Ovary (tissue), 10 donors: ENCODE measurements at regions of chr6 and their contacts with region 1.

Region 1: DNA sequence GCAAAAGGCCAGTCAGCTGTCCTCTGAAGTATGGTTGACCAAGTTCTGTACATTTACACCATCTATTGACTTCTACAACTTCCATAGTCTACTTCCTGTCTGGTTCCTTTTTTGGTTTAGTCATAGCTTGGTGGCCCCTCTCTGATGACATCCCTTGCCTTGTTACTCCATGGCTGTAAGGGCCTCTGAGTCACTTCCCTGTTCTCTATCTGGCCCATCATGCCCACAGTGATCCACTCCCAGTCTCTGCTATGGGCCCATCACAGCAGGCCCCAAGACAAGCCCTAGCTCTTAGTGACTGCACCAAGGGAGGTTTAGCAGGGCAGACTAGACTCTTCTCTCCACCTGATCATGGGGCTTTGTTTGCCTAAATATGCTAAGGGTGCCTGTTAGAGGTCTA is 441.6 kb downstream of the HACE1 start:
- DNase-seq: no peak
- H3K4me3 ChIP-seq: no peak overlapping the region
- H3K27ac ChIP-seq: no peak overlapping the region
- H3K4me1 ChIP-seq: no peaks in the 10 kb centered on the region
- H3K27me3 ChIP-seq: no peaks in the 10 kb centered on the region
- CTCF ChIP-seq: no peak
- EP300 ChIP-seq: no peak
- POLR2A ChIP-seq: no peak

Region 2: GRCh38 chr6:104949206-104949605 is 531.1 kb after region 1 on chr6:
- intact Hi-C with region 1: loop called in 1 of 4 experiments (anchors 5 kb)
- DNase-seq: no peak
- H3K4me3 ChIP-seq: no peak overlapping the region
- H3K27ac ChIP-seq: no peak overlapping the region
- H3K4me1 ChIP-seq: no peaks in the 10 kb centered on the region
- H3K27me3 ChIP-seq: no peaks in the 10 kb centered on the region
- CTCF ChIP-seq: no peak
- EP300 ChIP-seq: no peak
- POLR2A ChIP-seq: no peak